Heart right ventricle (tissue), 16 donors: ENCODE measurements at regions of chr18 and their contacts with region 1.

Region 1: DNA sequence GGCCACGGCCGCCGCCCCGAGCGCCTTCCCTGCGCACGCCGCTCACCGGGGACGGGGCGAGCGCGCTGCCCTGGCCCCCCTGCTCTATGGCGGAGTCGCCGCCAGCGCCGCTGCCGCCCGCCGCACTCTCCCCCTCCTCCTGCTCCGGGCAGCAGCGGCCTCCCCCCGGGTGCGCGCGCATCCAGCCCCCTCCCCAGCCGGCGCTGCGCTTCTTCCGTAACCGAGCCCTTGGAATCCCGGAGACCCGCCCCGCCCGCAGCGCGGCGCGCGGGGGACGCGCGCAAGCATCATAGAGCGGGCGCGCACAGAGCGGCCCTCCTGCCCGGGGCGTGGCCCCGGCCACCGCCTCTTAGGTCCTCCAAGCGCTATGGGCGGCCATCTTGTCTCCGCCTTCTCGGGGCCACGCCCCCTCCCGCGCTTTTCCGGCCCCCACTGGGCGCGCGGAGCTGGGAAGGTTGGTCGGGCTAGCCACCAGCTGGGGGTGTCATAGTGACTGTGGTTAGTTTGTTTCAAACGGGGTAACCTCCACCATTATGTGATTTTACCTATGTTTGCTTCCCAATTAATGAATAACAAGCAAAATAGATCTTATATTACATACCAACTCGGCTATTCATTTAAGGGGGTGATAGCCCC is at the start of gene MBD2:
- DNase-seq: peak; percentile 94 to 96
- ATAC-seq: peak; percentile 99 to 100 (median 100)
- H3K4me3 ChIP-seq: peak within 1 kb of the TSS; percentile 44 to 82 (median 72)
- H3K27ac ChIP-seq: peak within 1 kb of the TSS; percentile 59 to 87 (median 82)
- H3K4me1 ChIP-seq: peaks cover 0 to 48% (median 34%) of the 10 kb centered on the region in 9 donors
- H3K27me3 ChIP-seq: no peaks in the 10 kb centered on the region
- CTCF ChIP-seq: peak in 6 of 9 donors; percentile 21 to 65 (median 54)
- total RNA-seq, gene MBD2: 37.4 to 61.3 (median 42.6) TPM

Region 2: DNA sequence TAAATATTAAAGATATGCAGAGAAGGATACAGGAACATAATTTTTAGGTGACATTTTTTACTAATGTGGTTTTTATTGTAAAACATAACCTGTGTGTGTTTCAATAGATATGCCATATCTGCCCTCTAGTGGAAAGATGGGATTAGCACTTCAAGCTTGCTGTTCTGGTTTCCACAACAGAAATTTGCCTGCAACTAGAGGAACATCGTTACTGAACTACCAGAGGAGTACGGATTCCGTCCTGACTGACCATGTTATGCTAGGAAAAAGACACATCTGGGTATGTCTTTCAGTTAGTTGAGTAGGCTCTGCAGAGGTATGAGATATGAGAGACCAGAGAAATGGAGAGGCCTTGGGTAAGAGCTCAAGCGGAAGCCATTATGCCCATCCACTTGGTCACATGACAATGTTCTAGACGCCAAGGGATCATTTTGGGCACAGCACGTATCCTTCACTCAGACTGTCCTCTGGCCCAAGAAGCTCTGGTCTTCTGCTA is 104.9 kb before region 1 on chr18:
- intact Hi-C with region 1: no loop called
- DNase-seq: peak in 1 of 2 donors; percentile 5
- ATAC-seq: peak in 7 of 8 donors; percentile 34 to 80 (median 64)
- H3K4me3 ChIP-seq: peak overlapping the region in 3 of 10 donors; percentile 6 to 12 (median 10)
- H3K27ac ChIP-seq: no peak overlapping the region
- H3K4me1 ChIP-seq: peaks cover 0 to 4% (median 0%) of the 10 kb centered on the region in 9 donors
- H3K27me3 ChIP-seq: peaks cover 0 to 7% (median 0%) of the 10 kb centered on the region in 7 donors
- CTCF ChIP-seq: peak; percentile 30 to 84 (median 82)

Region 3: DNA sequence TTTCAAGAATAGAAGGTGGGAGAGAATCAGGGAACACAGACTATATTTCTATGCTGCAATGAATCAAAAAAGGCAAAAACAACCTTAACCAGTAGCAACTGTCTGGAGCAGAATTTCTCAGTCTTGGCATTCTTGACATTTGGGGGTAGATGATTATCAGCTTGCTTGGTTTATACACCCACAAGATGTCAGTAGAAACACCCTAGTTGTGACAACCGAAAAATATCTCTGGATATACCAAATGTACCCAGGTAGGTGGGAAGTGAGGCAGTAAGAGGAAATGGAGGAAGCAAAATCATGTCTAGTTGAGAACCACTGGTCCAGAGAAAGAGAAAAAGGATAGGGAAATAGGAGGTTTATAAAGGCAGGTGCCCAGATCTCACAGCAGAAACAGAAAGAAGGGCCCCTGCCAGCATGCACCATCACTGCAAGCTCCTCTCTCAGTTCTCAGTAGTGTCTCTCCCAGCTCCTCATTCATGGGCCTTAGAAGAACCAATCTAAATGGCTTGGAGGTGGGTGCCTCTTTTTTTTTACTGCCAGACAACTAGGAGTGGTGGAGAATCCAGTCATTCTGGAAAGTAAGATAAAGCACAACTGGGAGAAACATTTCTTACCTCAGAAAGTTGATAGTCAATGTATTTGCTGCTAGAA is 50.4 kb before region 1 on chr18:
- intact Hi-C with region 1: loop called in 1 of 10 experiments (anchors 5 kb)
- DNase-seq: no peak
- ATAC-seq: no peak
- H3K4me3 ChIP-seq: no peak overlapping the region
- H3K27ac ChIP-seq: no peak overlapping the region
- H3K4me1 ChIP-seq: peaks cover 0 to 22% (median 5%) of the 10 kb centered on the region in 9 donors
- H3K27me3 ChIP-seq: no peaks in the 10 kb centered on the region
- CTCF ChIP-seq: no peak

Region 4: DNA sequence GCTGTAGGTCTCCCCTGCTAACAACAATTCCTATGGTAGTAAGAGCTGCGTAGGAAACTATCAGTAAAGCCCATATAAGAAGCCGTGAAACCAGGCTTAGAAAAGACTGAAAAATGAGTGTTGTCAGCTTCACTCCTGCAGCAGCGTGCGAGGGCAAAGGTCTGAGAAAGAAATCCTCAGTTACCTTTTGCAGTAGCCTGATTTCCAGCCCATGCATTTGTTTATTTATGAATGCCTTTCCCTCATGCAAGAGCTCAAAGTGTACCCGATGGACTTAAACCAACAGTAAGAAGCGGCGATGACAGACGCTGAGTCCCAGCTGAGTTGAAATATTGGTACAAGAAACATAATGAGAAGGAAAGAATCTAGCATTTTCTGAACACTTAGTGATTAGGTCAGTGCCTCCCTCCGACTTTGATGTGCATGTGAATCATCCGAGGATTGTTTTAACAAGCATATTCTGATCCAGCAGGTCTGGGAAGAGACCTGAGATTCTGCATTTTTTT is 29.8 kb after region 1 on chr18:
- intact Hi-C with region 1: no loop called
- DNase-seq: no peak
- ATAC-seq: no peak
- H3K4me3 ChIP-seq: no peak overlapping the region
- H3K27ac ChIP-seq: no peak overlapping the region
- H3K4me1 ChIP-seq: peaks cover 0 to 66% (median 13%) of the 10 kb centered on the region in 9 donors
- H3K27me3 ChIP-seq: no peaks in the 10 kb centered on the region
- CTCF ChIP-seq: no peak

Region 5: GRCh38 chr18:54515149-54515548 is 290.7 kb after region 1 on chr18:
- intact Hi-C with region 1: no loop called
- DNase-seq: no peak
- ATAC-seq: no peak
- H3K4me3 ChIP-seq: no peak overlapping the region
- H3K27ac ChIP-seq: no peak overlapping the region
- H3K4me1 ChIP-seq: no peaks in the 10 kb centered on the region
- H3K27me3 ChIP-seq: no peaks in the 10 kb centered on the region
- CTCF ChIP-seq: no peak